ENCODE measurements at regions of chr1 and their contacts with region 1.

Region 1: DNA sequence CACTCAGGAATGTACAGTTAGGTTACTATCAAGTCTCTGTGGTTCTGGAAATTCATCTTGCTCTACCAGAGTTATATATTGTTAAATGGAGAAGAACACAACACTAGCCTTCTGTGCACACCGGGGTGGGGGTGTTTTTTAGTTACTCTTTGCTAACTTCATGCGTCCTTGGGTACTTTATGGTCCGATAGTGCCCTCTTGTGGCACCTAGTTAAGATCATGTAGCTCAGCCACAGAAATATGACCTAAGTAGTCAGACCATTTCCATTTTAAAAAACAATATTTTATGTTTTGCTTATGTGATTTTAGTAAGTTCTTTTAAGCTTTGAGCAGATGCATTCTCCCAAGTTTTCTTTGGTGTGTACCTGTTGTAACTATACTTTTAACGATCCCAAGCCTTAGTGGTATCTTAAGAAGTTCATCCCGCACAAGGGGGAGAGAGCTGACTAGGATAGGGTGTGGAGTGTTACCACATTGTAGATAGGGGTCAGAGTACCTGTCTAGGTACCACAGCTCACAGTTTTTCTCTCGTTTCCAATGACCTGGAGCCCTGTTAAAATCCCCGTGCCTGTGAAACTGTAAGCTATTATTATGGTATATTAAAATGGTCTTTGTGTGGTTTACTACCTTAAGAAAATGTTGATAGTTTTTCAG is 20.6 kb upstream of the SH3D21 start:
- DNase-seq: peak; percentile 78
- ATAC-seq: peak; percentile 78
- H3K4me3 Mint-ChIP-seq: no peak overlapping the region
- H3K27ac Mint-ChIP-seq: peak overlapping the region; percentile 82
- H3K4me1 Mint-ChIP-seq: peaks cover 35% of the 10 kb centered on the region
- H3K27me3 Mint-ChIP-seq: no peaks in the 10 kb centered on the region

Region 2: GRCh38 chr1:36099681-36100341 is 185.8 kb before region 1 on chr1:
- CTCF ChIA-PET with region 1: interaction called, 7 read pairs
- POLR2A ChIA-PET with region 1: interaction called, 3 read pairs
- intact Hi-C with region 1: loop called (anchors 1 kb)
- DNase-seq: peak; percentile 87
- ATAC-seq: peak; percentile 95
- H3K4me3 Mint-ChIP-seq: no peak overlapping the region
- H3K27ac Mint-ChIP-seq: peak overlapping the region; percentile 10
- H3K4me1 Mint-ChIP-seq: no peaks in the 10 kb centered on the region
- H3K27me3 Mint-ChIP-seq: no peaks in the 10 kb centered on the region

Region 3: GRCh38 chr1:36160949-36161485 is 124.6 kb before region 1 on chr1:
- CTCF ChIA-PET with region 1: interaction called, 19 read pairs
- POLR2A ChIA-PET with region 1: interaction called, 3 read pairs
- intact Hi-C with region 1: no loop called
- DNase-seq: peak; percentile 86
- ATAC-seq: peak; percentile 59
- H3K4me3 Mint-ChIP-seq: peak overlapping the region; percentile 76
- H3K27ac Mint-ChIP-seq: peak overlapping the region; percentile 94
- H3K4me1 Mint-ChIP-seq: peaks cover 62% of the 10 kb centered on the region
- H3K27me3 Mint-ChIP-seq: no peaks in the 10 kb centered on the region

Region 4: DNA sequence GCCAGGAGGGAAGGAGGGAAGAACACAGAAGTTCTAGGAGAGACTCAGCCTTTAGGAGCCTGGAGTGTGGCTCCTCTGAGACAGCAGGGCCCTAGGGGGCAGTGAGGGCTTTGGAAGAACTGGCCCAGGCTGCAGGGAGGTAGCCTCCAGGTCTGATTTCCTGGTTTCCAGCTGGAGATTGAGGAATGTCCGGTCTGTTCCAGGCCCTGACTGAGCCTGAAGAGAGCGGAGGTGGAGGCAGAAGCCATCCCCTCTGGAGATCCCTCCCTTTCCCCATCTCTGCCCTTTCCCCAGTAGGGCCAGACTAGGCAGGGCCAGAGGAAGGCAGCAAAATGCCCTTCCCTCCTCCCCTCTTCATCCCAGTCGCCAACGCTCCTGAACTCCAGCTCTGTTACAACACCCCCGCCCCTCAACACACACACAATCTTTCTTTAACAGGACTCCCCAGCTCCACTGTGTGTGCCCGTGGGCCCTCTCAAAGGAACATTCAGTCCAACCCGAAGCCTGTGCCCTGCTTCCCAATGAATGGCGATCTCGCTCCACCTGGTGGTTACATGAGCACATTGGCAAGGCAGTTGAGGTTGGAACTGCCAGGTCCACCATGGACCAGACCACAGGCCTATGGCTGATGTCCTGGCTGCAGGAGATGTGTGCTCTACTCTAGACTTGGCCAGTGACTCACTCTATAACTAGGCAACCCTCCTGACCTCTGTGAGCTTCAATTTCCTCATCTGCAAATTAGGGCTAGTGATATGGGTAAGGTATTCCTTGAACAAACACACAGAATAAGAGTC is 97.6 kb before region 1 on chr1:
- CTCF ChIA-PET with region 1: interaction called, 10 read pairs
- POLR2A ChIA-PET with region 1: no interaction called
- intact Hi-C with region 1: loop called in 1 of 2 experiments (anchors 1 kb)
- DNase-seq: peak; percentile 87
- ATAC-seq: peak; percentile 99
- H3K4me3 Mint-ChIP-seq: no peak overlapping the region
- H3K27ac Mint-ChIP-seq: peak overlapping the region; percentile 56
- H3K4me1 Mint-ChIP-seq: peaks cover 4% of the 10 kb centered on the region
- H3K27me3 Mint-ChIP-seq: no peaks in the 10 kb centered on the region

Region 5: GRCh38 chr1:36257375-36257767 is 28.2 kb before region 1 on chr1:
- CTCF ChIA-PET with region 1: interaction called, 10 read pairs
- POLR2A ChIA-PET with region 1: no interaction called
- intact Hi-C with region 1: no loop called
- DNase-seq: peak; percentile 33
- ATAC-seq: peak; percentile 60
- H3K4me3 Mint-ChIP-seq: no peak overlapping the region
- H3K27ac Mint-ChIP-seq: no peak overlapping the region
- H3K4me1 Mint-ChIP-seq: peaks cover 43% of the 10 kb centered on the region
- H3K27me3 Mint-ChIP-seq: no peaks in the 10 kb centered on the region

Region 6: DNA sequence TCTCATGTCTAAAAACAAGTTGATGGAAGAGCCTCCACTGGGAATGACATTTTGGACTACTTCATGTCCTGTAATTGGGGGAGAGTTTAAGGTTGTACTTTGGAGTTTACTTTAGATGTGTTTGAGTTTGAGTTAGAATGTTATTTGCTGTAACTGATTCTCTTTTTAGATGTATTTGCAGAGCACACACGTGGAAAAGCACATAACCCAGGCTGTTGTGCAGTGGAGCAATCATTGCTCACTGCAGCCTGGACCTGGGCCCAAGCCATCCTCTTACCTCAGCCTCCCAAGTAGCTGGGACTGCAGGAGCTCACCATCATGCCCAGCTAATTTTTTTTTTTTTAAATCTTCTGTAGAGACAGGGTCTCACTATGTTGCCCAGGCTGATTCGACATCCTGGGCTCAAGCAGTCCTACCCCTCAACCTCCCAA is 16.2 kb before region 1 on chr1:
- CTCF ChIA-PET with region 1: interaction called, 11 read pairs
- POLR2A ChIA-PET with region 1: no interaction called
- intact Hi-C with region 1: no loop called
- DNase-seq: no peak
- ATAC-seq: no peak
- H3K4me3 Mint-ChIP-seq: no peak overlapping the region
- H3K27ac Mint-ChIP-seq: no peak overlapping the region
- H3K4me1 Mint-ChIP-seq: peaks cover 15% of the 10 kb centered on the region
- H3K27me3 Mint-ChIP-seq: no peaks in the 10 kb centered on the region

Region 7: GRCh38 chr1:36300526-36300925 is 15.0 kb after region 1 on chr1:
- CTCF ChIA-PET with region 1: interaction called, 21 read pairs
- POLR2A ChIA-PET with region 1: interaction called, 3 read pairs
- intact Hi-C with region 1: loop called in 1 of 2 experiments (anchors 1 kb)
- DNase-seq: peak; percentile 49
- ATAC-seq: peak; percentile 72
- H3K4me3 Mint-ChIP-seq: peak overlapping the region; percentile 3
- H3K27ac Mint-ChIP-seq: peak overlapping the region; percentile 87
- H3K4me1 Mint-ChIP-seq: peaks cover 64% of the 10 kb centered on the region
- H3K27me3 Mint-ChIP-seq: no peaks in the 10 kb centered on the region

Region 8: GRCh38 chr1:36377791-36378492 is 92.4 kb after region 1 on chr1:
- CTCF ChIA-PET with region 1: no interaction called
- POLR2A ChIA-PET with region 1: no interaction called
- intact Hi-C with region 1: no loop called
- DNase-seq: no peak
- ATAC-seq: no peak
- H3K4me3 Mint-ChIP-seq: no peak overlapping the region
- H3K27ac Mint-ChIP-seq: peak overlapping the region; percentile 72
- H3K4me1 Mint-ChIP-seq: peaks cover 77% of the 10 kb centered on the region
- H3K27me3 Mint-ChIP-seq: no peaks in the 10 kb centered on the region

Region 9: GRCh38 chr1:37549341-37549740 is 1263.8 kb after region 1 on chr1:
- CTCF ChIA-PET with region 1: no interaction called
- POLR2A ChIA-PET with region 1: no interaction called
- intact Hi-C with region 1: no loop called
- DNase-seq: no peak
- ATAC-seq: no peak
- H3K4me3 Mint-ChIP-seq: no peak overlapping the region
- H3K27ac Mint-ChIP-seq: peak overlapping the region; percentile 76
- H3K4me1 Mint-ChIP-seq: peaks cover 36% of the 10 kb centered on the region
- H3K27me3 Mint-ChIP-seq: no peaks in the 10 kb centered on the region

Measured in activated CD4-positive, alpha-beta T cell treated with anti-CD3 and anti-CD28 coated beads for 36 hours (primary cell).